ENCODE measurements at regions of chr11 and their contacts with region 1.

Region 1: GRCh38 chr11:75896843-75897419 is 81.9 kb downstream of the UVRAG start:
- DNase-seq: no peak
- H3K4me3 Mint-ChIP-seq: no peak overlapping the region
- H3K27ac Mint-ChIP-seq: no peak overlapping the region
- H3K4me1 Mint-ChIP-seq: peaks cover 9% of the 10 kb centered on the region
- H3K27me3 Mint-ChIP-seq: no peaks in the 10 kb centered on the region

Region 2: DNA sequence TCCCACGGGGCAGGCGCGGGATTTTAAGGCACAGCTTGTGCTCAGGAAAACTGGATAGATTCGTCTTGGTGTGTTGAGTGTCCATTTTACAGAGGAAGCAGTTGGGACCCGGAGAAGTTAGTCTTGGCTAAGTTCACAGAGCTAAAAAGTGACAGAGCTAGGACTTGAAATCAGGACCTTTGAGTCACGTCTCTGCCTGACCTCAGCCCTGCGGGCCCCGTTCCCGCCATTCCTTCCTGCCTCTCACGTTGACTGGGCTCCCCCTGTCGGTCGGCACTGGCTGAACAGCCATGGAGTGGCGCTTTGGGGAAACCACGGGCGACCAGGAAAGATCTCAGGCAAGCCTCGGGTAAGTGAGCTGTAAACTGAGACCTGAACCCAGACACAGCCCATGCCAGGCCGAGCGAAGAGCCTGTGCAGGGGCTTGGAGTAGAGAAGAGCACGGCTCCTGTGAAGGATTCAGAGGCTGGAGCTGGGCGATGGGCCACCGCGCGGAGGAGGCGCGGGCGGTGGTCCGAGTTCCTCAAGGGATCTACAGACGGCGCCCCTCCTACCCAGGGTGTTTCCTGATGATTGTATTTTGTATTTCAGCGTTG is 255.3 kb after region 1 on chr11:
- intact Hi-C with region 1: loop called (anchors 1 kb)
- DNase-seq: peak; percentile 95
- H3K4me3 Mint-ChIP-seq: peak overlapping the region; percentile 77
- H3K27ac Mint-ChIP-seq: no peak overlapping the region
- H3K4me1 Mint-ChIP-seq: peaks cover 17% of the 10 kb centered on the region
- H3K27me3 Mint-ChIP-seq: peaks cover 28% of the 10 kb centered on the region

Region 3: DNA sequence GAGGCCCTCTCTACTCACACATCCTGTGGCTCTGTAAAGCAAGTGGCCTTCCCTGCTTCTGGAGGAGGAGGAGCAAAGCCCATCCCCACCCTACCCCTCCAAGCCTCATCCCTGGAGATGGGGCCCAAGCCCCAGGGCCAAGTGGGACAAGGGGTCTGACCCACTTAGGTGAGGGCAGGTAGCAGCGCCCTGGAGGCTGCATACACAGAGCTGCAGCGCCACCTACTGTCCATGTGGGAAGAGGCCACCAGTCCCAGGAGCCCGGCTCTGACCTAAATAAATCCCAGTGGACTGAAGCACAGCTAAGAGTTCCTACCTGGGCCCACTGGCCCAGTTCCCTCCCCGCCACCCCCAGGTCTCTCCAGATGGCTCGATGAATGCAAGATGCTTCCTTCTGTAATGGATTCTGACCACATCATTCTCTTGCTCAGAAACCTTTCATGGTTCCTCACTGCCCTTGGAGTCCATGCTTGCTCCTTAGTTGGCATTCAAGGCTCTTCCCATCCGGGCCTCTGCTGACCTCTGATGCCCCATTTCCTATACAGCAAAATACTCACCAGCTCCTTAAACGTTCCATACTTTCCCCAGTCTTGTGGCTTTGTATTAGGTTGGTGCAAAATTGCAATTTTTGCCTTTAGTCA is 421.9 kb after region 1 on chr11:
- intact Hi-C with region 1: loop called (anchors 2 kb)
- DNase-seq: peak; percentile 94
- H3K4me3 Mint-ChIP-seq: no peak overlapping the region
- H3K27ac Mint-ChIP-seq: no peak overlapping the region
- H3K4me1 Mint-ChIP-seq: peaks cover 14% of the 10 kb centered on the region
- H3K27me3 Mint-ChIP-seq: peaks cover 42% of the 10 kb centered on the region

Region 4: DNA sequence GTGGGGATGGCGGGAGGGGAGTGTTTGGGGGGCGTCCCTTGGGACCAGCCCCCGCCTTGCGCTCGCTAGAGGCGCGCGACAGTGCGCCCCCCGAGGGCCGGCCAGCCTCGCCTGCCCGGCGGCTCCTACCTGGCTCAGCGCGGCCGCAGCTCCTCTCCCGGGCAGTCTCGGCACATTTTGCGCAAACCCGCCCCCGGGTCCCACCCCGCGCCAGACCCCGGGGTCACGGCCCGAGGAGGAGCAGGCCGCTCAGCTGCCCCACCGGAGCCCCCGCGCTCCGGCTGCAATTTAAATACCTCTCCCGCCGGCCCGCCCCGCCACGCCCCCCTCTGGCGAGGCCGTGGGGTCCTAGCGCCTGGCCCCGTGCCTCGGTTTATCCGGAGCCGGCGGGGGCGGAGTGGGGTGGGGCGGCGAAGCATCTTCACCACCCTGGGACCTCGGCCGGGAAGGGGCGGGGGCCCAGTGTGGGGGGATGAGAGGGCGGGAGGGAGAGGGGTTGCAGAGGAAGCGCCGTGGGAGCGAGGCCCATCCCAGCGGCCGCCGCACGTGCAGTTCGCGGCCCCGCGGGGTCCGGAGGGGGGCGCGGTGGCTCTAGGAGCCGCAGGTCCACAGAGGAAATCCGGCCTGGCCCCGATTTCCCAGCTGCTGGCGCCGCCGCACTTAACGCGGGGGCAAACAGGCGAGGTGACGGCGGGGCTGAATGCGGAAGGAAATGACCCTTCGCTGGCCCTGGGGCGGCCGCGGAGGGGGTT is 773.7 kb after region 1 on chr11 and contains the start of gene LRRC32:
- intact Hi-C with region 1: loop called (anchors 10 kb)
- DNase-seq: peak; percentile 77
- H3K4me3 Mint-ChIP-seq: peak within 1 kb of the TSS; percentile 79
- H3K27ac Mint-ChIP-seq: no peak within 1 kb of the TSS
- H3K4me1 Mint-ChIP-seq: peaks cover 34% of the 10 kb centered on the region
- H3K27me3 Mint-ChIP-seq: peaks cover 28% of the 10 kb centered on the region
- total RNA-seq, gene LRRC32: 6.6 and 8.6 TPM in 2 replicates

Measured in activated CD4-positive, alpha-beta T cell treated with anti-CD3 and anti-CD28 coated beads, Interleukin-2, amount 10 ng/mL, durations not matched to agents 24 days and 14 days (primary cell).